ENCODE measurements at regions of chr3 and their contacts with region 1.

Region 1: DNA sequence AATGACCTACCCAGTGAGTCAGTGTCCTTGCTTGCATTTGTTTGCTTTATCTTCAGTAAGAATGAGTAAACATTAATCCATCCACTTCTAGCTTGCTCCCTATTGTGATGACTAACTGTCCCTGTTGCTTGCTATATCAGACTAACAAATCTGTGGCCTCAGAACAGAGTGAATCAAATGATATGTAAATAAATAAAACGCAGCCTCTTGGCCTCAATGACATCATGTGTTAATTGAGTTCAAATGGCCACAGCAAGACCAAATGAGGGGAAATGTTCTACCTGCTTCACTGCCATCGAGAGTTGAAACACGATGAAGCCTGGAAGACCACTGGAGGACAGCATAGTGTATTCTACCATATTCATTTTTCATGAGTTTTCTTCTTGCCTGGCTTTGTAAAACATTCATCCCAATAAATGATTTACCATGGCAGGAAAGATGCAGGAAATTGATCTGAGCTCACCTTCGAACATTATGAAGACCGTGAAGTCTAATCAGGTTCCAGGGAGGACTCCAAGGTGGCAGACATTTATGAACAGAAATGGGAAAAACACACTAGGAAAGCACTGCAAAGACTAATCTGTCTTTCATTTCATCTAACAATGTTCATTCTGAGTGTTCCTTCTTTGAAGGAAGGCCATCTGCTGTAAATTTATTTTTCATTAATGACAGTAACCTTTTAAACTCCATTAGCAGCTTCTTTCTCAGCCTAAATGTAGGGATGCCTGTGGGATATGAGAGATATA is 1144.5 kb downstream of the TUSC7 start:
- DNase-seq: peak; percentile 32
- H3K4me3 ChIP-seq: no peak overlapping the region
- H3K27ac ChIP-seq: no peak overlapping the region
- H3K4me1 ChIP-seq: peaks cover 2% of the 10 kb centered on the region
- H3K27me3 ChIP-seq: no peaks in the 10 kb centered on the region
- CTCF ChIP-seq: no peak
- POLR2A ChIP-seq: no peak

Region 2: GRCh38 chr3:117645561-117646242 is 208.4 kb before region 1 on chr3:
- CTCF ChIA-PET with region 1: no interaction called
- POLR2A ChIA-PET with region 1: no interaction called
- dilution Hi-C with region 1: no loop called
- intact Hi-C with region 1: loop called (anchors 10 kb)
- DNase-seq: peak; percentile 8
- H3K4me3 ChIP-seq: no peak overlapping the region
- H3K27ac ChIP-seq: no peak overlapping the region
- H3K4me1 ChIP-seq: no peaks in the 10 kb centered on the region
- H3K27me3 ChIP-seq: no peaks in the 10 kb centered on the region
- CTCF ChIP-seq: no peak
- POLR2A ChIP-seq: no peak

Region 3: DNA sequence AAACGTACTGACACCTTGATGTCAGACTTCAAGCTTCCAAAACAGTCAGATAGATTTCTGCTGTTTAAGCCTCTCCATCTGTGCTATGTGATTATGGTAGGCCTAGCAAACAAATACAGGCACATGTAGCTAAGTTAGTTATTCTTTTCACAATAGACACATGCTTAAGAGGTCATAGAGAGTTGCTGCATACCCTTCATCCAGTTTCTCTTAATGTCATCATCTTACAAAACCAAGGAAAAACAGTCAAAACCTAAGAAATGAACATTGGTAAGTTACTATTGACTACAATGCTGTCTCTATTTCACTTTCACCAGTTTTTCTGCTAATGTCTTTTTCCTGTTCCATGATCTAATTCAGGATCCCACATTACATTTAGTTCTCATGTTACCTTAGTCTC is 197.7 kb before region 1 on chr3:
- CTCF ChIA-PET with region 1: no interaction called
- POLR2A ChIA-PET with region 1: no interaction called
- dilution Hi-C with region 1: no loop called
- intact Hi-C with region 1: no loop called
- DNase-seq: no peak
- H3K4me3 ChIP-seq: no peak overlapping the region
- H3K27ac ChIP-seq: no peak overlapping the region
- H3K4me1 ChIP-seq: no peaks in the 10 kb centered on the region
- H3K27me3 ChIP-seq: no peaks in the 10 kb centered on the region
- CTCF ChIP-seq: no peak
- POLR2A ChIP-seq: no peak

Measured in endothelial cell of umbilical vein (primary cell).